Naive thymus-derived CD4-positive, alpha-beta T cell (primary cell): ENCODE measurements at regions of chr2 and their contacts with region 1.

Region 1: DNA sequence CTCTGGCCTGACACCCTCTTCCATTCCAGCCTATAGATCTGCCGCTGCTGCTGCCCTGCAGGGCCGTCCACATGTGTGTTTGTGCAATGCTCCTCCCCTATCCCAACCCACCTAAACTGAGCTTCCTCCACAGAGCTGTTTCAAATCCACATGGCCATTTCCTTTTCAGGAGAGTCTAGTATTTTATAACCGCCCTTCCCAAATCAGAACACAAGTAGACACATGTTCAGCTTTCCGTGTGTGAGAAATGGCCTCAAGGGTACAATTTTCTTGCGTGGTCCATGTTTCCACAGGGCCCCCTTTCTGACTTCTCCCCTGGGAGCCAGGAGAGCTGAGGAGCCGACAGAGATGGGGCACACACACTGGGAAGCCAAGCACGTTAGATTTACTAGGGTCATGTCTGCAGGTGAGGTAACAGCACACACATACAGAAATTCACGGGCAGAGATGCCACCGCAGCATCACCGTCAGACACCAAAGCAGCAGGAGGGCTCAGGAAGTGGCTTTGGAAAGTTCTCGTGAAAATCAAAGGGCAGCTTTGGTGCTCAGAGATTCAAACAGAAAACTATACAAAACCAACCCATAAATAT is 102.9 kb upstream of the TGFA start:
- DNase-seq: peak in 7 of 9 donors; percentile 67 to 84 (median 80)
- ATAC-seq: peak; percentile 86
- H3K4me3 ChIP-seq: no peak overlapping the region
- H3K4me3 Mint-ChIP-seq: peak overlapping the region in 9 of 10 donors; percentile 12 to 73 (median 59)
- H3K27ac ChIP-seq: peak overlapping the region; percentile 63
- H3K27ac Mint-ChIP-seq: peak overlapping the region in 8 of 9 donors; percentile 64 to 96 (median 88)
- H3K4me1 ChIP-seq: peaks cover 0 to 29% of the 10 kb centered on the region in 2 donors
- H3K4me1 Mint-ChIP-seq: peaks cover 11 to 52% (median 37%) of the 10 kb centered on the region in 7 donors
- H3K27me3 ChIP-seq: no peaks in the 10 kb centered on the region
- H3K27me3 Mint-ChIP-seq: peaks cover 0 to 26% (median 22%) of the 10 kb centered on the region in 5 donors

Region 2: GRCh38 chr2:70046534-70046933 is 610.0 kb before region 1 on chr2:
- CTCF ChIA-PET with region 1: no interaction called
- POLR2A ChIA-PET with region 1: no interaction called
- intact Hi-C with region 1: no loop called
- DNase-seq: no peak
- ATAC-seq: no peak
- H3K4me3 ChIP-seq: no peak overlapping the region
- H3K4me3 Mint-ChIP-seq: no peak overlapping the region
- H3K27ac ChIP-seq: no peak overlapping the region
- H3K27ac Mint-ChIP-seq: peak overlapping the region in 6 of 9 donors; percentile 38 to 81 (median 69)
- H3K4me1 ChIP-seq: peaks cover 9 to 11% of the 10 kb centered on the region in 2 donors
- H3K4me1 Mint-ChIP-seq: peaks cover 13 to 61% (median 23%) of the 10 kb centered on the region in 7 donors
- H3K27me3 ChIP-seq: no peaks in the 10 kb centered on the region
- H3K27me3 Mint-ChIP-seq: no peaks in the 10 kb centered on the region

Region 3: GRCh38 chr2:70553334-70553583 is 103.3 kb before region 1 on chr2:
- CTCF ChIA-PET with region 1: no interaction called
- POLR2A ChIA-PET with region 1: no interaction called
- intact Hi-C with region 1: no loop called
- DNase-seq: peak in 5 of 9 donors; percentile 35 to 56 (median 50)
- ATAC-seq: peak; percentile 51
- H3K4me3 ChIP-seq: peak overlapping the region; percentile 65
- H3K4me3 Mint-ChIP-seq: peak overlapping the region; percentile 79 to 96 (median 90)
- H3K27ac ChIP-seq: peak overlapping the region; percentile 60
- H3K27ac Mint-ChIP-seq: peak overlapping the region in 8 of 9 donors; percentile 63 to 89 (median 78)
- H3K4me1 ChIP-seq: peaks cover 14 to 21% of the 10 kb centered on the region in 2 donors
- H3K4me1 Mint-ChIP-seq: peaks cover 15 to 37% (median 32%) of the 10 kb centered on the region in 7 donors
- H3K27me3 ChIP-seq: no peaks in the 10 kb centered on the region
- H3K27me3 Mint-ChIP-seq: peaks cover 0 to 78% (median under 1%) of the 10 kb centered on the region in 5 donors

Region 4: DNA sequence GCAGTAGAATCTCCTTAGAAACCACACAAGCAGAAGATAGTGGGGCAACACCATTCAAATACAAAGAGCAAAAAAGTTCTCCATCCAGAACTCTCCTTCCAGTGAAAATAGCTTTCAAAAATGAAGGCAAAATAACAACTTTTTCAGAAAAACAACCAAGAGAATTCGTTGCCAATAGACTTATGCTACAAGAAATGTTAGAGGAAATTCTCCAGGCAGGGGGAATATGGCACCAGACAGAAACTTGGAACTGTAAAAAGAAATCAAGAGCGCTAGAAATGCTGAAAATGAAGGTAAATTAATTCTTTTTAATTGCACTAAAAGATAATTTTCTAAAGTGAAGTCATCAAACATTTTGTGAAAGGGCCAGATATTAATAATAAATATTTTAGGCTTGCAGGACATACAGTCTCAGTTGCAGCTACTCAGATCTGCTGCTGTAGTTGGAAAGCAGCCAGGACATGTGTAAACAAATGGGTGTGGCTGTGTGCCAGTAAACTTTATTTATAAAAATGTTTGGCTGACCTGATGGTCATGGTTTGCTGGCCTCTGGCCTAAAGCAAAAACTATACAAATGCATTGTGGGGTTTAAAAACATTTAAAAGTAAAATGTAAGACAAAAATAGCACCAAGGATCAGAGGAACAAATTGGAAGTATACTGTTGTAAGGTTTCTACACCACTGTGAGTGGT is 29.2 kb before region 1 on chr2:
- CTCF ChIA-PET with region 1: no interaction called
- POLR2A ChIA-PET with region 1: no interaction called
- intact Hi-C with region 1: no loop called
- DNase-seq: no peak
- ATAC-seq: no peak
- H3K4me3 ChIP-seq: no peak overlapping the region
- H3K4me3 Mint-ChIP-seq: no peak overlapping the region
- H3K27ac ChIP-seq: no peak overlapping the region
- H3K27ac Mint-ChIP-seq: no peak overlapping the region
- H3K4me1 ChIP-seq: no peaks in the 10 kb centered on the region
- H3K4me1 Mint-ChIP-seq: peaks cover 0 to 2% (median 0%) of the 10 kb centered on the region in 7 donors
- H3K27me3 ChIP-seq: no peaks in the 10 kb centered on the region
- H3K27me3 Mint-ChIP-seq: peaks cover 0 to 31% (median 0%) of the 10 kb centered on the region in 5 donors

Region 5: DNA sequence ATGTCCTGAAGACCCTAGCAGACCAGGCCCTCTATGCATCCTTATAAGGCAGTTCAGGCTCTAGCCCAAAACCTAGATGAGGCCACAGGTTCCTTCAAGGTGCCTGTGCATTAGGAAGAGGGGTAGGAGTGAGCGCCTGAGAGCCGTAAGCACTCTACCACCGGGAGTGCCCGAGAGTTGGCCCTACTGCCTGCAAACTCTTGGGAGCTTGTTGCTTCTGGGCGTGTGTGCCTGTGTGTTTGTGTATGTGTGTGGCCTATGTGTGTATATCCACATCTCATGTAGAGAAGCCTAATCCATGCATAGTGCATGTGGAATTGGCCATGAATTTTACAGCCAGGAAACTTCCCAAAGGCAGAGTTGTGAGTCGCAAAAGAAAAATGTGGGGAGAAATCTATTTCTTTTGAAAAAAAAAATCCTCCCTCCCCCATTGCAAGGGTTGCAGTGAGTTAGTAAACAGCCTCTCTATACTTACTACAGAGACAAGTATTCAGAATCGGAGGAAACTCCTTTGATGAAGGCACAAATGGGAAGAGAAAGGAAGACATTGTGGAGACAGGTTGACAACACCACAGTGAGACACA is 14.7 kb after region 1 on chr2:
- CTCF ChIA-PET with region 1: interaction called, 8 read pairs
- POLR2A ChIA-PET with region 1: interaction called, 5 read pairs
- intact Hi-C with region 1: loop called in 1 of 2 experiments (anchors 2 kb)
- DNase-seq: no peak
- ATAC-seq: no peak
- H3K4me3 ChIP-seq: no peak overlapping the region
- H3K4me3 Mint-ChIP-seq: no peak overlapping the region
- H3K27ac ChIP-seq: no peak overlapping the region
- H3K27ac Mint-ChIP-seq: peak overlapping the region in 2 of 9 donors; percentile 6 to 41
- H3K4me1 ChIP-seq: no peaks in the 10 kb centered on the region
- H3K4me1 Mint-ChIP-seq: peaks cover 0 to 17% (median 12%) of the 10 kb centered on the region in 7 donors
- H3K27me3 ChIP-seq: no peaks in the 10 kb centered on the region
- H3K27me3 Mint-ChIP-seq: no peaks in the 10 kb centered on the region

Region 6: GRCh38 chr2:70767699-70768589 is 111.4 kb after region 1 on chr2 and contains the start of gene ADD2:
- CTCF ChIA-PET with region 1: interaction called, 26 read pairs
- POLR2A ChIA-PET with region 1: interaction called, 4 read pairs
- intact Hi-C with region 1: loop called (anchors 1 to 5 kb)
- DNase-seq: peak; percentile 11 to 53 (median 40)
- ATAC-seq: peak; percentile 82
- H3K4me3 ChIP-seq: peak within 1 kb of the TSS; percentile 73
- H3K4me3 Mint-ChIP-seq: peak within 1 kb of the TSS; percentile 76 to 96 (median 90)
- H3K27ac ChIP-seq: peak within 1 kb of the TSS; percentile 46
- H3K27ac Mint-ChIP-seq: peak within 1 kb of the TSS; percentile 25 to 92 (median 63)
- H3K4me1 ChIP-seq: peaks cover 5 to 7% of the 10 kb centered on the region in 2 donors
- H3K4me1 Mint-ChIP-seq: peaks cover 14 to 38% (median 20%) of the 10 kb centered on the region in 7 donors
- H3K27me3 ChIP-seq: peaks cover 0 to 3% of the 10 kb centered on the region in 2 donors
- H3K27me3 Mint-ChIP-seq: peaks cover 0 to 62% (median 19%) of the 10 kb centered on the region in 5 donors
- total RNA-seq, gene ADD2: 5.8 to 18.8 (median 7.7) TPM

Region 7: GRCh38 chr2:70871398-70872211 is 215.1 kb after region 1 on chr2:
- CTCF ChIA-PET with region 1: interaction called, 9 read pairs
- POLR2A ChIA-PET with region 1: interaction called, 3 read pairs
- intact Hi-C with region 1: loop called in 1 of 2 experiments (anchors 2 kb)
- DNase-seq: peak; percentile 38 to 83 (median 69)
- ATAC-seq: peak; percentile 98
- H3K4me3 ChIP-seq: peak overlapping the region; percentile 23
- H3K4me3 Mint-ChIP-seq: peak overlapping the region in 8 of 10 donors; percentile 37 to 74 (median 52)
- H3K27ac ChIP-seq: no peak overlapping the region
- H3K27ac Mint-ChIP-seq: no peak overlapping the region
- H3K4me1 ChIP-seq: peaks cover 8 to 9% of the 10 kb centered on the region in 2 donors
- H3K4me1 Mint-ChIP-seq: peaks cover 0 to 7% (median 4%) of the 10 kb centered on the region in 7 donors
- H3K27me3 ChIP-seq: peaks cover 5 to 14% of the 10 kb centered on the region in 2 donors
- H3K27me3 Mint-ChIP-seq: peaks cover 31 to 46% (median 44%) of the 10 kb centered on the region in 5 donors

Region 8: GRCh38 chr2:70948337-70949003 is 292.0 kb after region 1 on chr2:
- CTCF ChIA-PET with region 1: interaction called, 11 read pairs
- POLR2A ChIA-PET with region 1: no interaction called
- intact Hi-C with region 1: loop called (anchors 1 to 10 kb)
- DNase-seq: peak; percentile 52 to 78 (median 70)
- ATAC-seq: peak; percentile 96
- H3K4me3 ChIP-seq: no peak overlapping the region
- H3K4me3 Mint-ChIP-seq: peak overlapping the region; percentile 73 to 96 (median 84)
- H3K27ac ChIP-seq: no peak overlapping the region
- H3K27ac Mint-ChIP-seq: peak overlapping the region in 2 of 9 donors; percentile 53 to 71
- H3K4me1 ChIP-seq: peaks cover 0 to 4% of the 10 kb centered on the region in 2 donors
- H3K4me1 Mint-ChIP-seq: peaks cover 10 to 18% (median 14%) of the 10 kb centered on the region in 7 donors
- H3K27me3 ChIP-seq: no peaks in the 10 kb centered on the region
- H3K27me3 Mint-ChIP-seq: peaks cover under 1 to 29% (median 23%) of the 10 kb centered on the region in 5 donors